AG04449 (cell line): ENCODE measurements at regions of chr6 and their contacts with region 1.

Region 1: GRCh38 chr6:32785781-32786533 is 22.6 kb upstream of the HLA-DQB2 start:
- DNase-seq: no peak
- H3K4me3 ChIP-seq: no peak overlapping the region
- CTCF ChIP-seq: peak; percentile 55

Region 2: DNA sequence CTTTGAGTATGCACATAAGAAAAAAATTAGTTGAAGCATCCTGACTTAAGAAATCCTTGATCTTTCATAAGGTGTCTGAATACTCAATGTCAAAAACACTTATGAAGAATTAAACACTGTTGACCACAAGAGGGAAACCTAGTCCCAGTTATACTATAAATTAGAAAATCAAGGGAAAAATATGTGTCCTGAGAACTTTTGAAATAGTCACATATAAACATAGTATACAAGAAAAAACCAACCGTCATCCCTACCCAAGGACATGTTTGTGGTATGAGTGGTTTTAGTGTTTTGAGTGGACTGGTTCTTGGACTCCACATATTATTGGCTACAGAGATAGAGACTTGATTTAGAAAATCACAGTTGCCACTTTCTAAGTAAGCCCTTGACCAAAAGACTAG is 353.9 kb before region 1 on chr6:
- CTCF ChIA-PET with region 1: interaction called, 24 read pairs
- POLR2A ChIA-PET with region 1: interaction called, 3 read pairs
- DNase-seq: no peak
- H3K4me3 ChIP-seq: no peak overlapping the region
- CTCF ChIP-seq: no peak

Region 3: DNA sequence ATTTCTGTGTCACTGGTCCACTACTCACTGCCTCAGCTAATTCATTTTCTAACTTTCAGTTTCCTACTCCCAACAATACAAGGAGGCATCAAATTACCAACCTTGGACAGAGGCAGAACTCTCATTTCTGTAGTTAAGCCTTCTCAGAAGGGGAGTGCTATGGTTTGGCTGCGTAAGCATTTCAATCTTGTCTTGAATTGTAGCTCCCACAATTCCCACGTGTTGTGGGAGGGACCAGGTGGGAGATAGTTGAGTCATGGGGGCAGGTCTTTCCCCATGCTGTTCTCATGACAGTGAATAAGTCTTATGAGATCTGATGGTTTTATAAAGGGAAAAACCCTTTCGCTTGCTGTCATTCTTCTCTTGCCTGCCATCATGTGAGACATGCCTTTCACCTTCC is 323.3 kb before region 1 on chr6:
- CTCF ChIA-PET with region 1: no interaction called
- POLR2A ChIA-PET with region 1: no interaction called
- DNase-seq: no peak
- H3K4me3 ChIP-seq: no peak overlapping the region
- CTCF ChIP-seq: no peak

Region 4: GRCh38 chr6:32659856-32660595 is 125.9 kb before region 1 on chr6:
- CTCF ChIA-PET with region 1: no interaction called
- POLR2A ChIA-PET with region 1: no interaction called
- DNase-seq: no peak
- H3K4me3 ChIP-seq: no peak overlapping the region
- CTCF ChIP-seq: no peak

Region 5: DNA sequence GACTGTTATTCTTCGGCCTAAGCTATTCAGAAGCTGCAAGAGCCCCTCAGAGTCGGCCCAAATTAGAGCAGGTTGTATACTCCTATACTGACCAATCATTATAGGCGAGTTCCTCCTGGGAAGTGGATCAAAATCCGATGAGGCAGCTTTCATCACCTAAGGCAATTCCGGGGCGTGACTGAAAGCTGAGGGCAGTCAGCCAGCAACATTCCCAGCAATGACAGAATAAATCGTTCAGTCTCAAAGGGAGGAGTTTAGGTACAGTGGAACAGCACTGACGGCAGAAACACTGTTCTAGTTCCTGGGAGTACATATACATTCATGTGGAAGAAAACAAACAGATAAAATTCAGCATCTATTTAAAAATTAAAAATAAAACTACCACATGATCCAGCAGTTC is 33.4 kb before region 1 on chr6:
- CTCF ChIA-PET with region 1: no interaction called
- POLR2A ChIA-PET with region 1: no interaction called
- DNase-seq: no peak
- H3K4me3 ChIP-seq: no peak overlapping the region
- CTCF ChIP-seq: no peak

Region 6: DNA sequence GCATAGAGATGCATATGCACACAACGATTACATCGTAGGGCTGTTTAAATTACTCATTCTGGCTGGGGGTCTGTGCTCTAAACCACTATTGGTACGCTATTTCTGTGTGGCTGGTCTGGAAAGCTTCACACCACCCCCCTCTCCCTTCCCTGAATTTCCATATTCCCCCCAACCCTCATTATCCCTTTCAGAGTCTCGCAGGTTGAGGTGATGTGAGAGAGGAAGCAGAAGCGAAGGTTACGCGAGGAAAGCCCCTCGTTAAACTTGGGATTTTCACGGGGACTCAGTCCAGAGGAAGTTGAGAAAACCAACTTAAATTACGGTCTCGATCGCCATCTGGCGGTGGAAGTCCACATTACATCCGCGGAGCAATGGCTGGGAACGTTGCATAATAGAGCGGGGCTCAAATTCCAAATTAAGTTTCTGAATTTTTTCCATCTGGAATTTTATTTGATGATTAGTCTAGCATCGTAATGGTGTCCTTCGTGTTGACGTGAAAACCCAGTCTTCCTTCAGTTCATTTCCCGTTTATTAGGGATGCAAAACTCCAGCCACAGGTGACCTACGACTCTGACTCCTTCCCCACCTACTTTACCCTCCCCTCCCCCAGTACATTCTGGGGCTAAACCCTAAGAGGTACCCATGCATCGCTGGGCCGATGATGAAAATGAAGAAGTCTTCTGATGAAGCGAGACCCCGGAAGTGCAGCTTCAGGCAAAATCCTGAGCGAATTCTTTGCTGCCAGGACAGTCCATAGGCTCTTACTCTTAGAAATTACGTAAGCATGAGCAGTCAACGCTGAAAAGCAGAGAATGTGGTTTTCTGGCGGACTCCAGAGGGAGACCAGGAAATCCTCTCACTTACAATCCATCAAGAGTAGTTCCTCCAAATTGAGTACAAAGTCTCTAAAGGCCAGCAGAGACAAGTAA is 11.2 kb after region 1 on chr6:
- CTCF ChIA-PET with region 1: interaction called, 19 read pairs
- POLR2A ChIA-PET with region 1: no interaction called
- DNase-seq: no peak
- H3K4me3 ChIP-seq: peak overlapping the region; percentile 49
- CTCF ChIP-seq: peak; percentile 69